ENCODE measurements at regions of chr20 and their contacts with region 1.

Region 1: GRCh38 chr20:36605399-36606157 is at the start of gene RAB5IF:
- DNase-seq: peak; percentile 98 to 100 (median 99)
- H3K4me3 ChIP-seq: peak within 1 kb of the TSS; percentile 65
- H3K4me3 Mint-ChIP-seq: peak within 1 kb of the TSS; percentile 97 to 99 (median 98)
- H3K27ac ChIP-seq: peak within 1 kb of the TSS; percentile 88
- H3K27ac Mint-ChIP-seq: peak within 1 kb of the TSS; percentile 97 to 99 (median 98)
- H3K4me1 ChIP-seq: peaks cover 27% of the 10 kb centered on the region
- H3K4me1 Mint-ChIP-seq: peaks cover 23 to 43% (median 34%) of the 10 kb centered on the region in 3 donors
- H3K27me3 ChIP-seq: no peaks in the 10 kb centered on the region
- H3K27me3 Mint-ChIP-seq: peaks cover 0 to 1% of the 10 kb centered on the region in 2 donors
- total RNA-seq, gene RAB5IF: 159 to 173 TPM

Region 2: GRCh38 chr20:36465109-36466080 is 140.2 kb before region 1 on chr20:
- CTCF ChIA-PET with region 1: interaction called, 14 read pairs
- POLR2A ChIA-PET with region 1: interaction called, 3 read pairs
- DNase-seq: no peak
- H3K4me3 ChIP-seq: no peak overlapping the region
- H3K4me3 Mint-ChIP-seq: peak overlapping the region; percentile 45 to 85 (median 61)
- H3K27ac ChIP-seq: no peak overlapping the region
- H3K27ac Mint-ChIP-seq: peak overlapping the region; percentile 70 to 96 (median 91)
- H3K4me1 ChIP-seq: peaks cover 75% of the 10 kb centered on the region
- H3K4me1 Mint-ChIP-seq: peaks cover 66 to 84% (median 73%) of the 10 kb centered on the region in 3 donors
- H3K27me3 ChIP-seq: no peaks in the 10 kb centered on the region
- H3K27me3 Mint-ChIP-seq: no peaks in the 10 kb centered on the region

Region 3: GRCh38 chr20:36573103-36573794 is 32.3 kb before region 1 on chr20 and contains the start of gene TGIF2:
- CTCF ChIA-PET with region 1: interaction called, 42 read pairs
- POLR2A ChIA-PET with region 1: interaction called, 49 read pairs
- DNase-seq: peak; percentile 85 to 96 (median 93)
- H3K4me3 ChIP-seq: peak within 1 kb of the TSS; percentile 66
- H3K4me3 Mint-ChIP-seq: peak within 1 kb of the TSS; percentile 90 to 96 (median 93)
- H3K27ac ChIP-seq: peak within 1 kb of the TSS; percentile 91
- H3K27ac Mint-ChIP-seq: peak within 1 kb of the TSS; percentile 97 to 100 (median 98)
- H3K4me1 ChIP-seq: peaks cover 33% of the 10 kb centered on the region
- H3K4me1 Mint-ChIP-seq: peaks cover 30 to 40% (median 37%) of the 10 kb centered on the region in 3 donors
- H3K27me3 ChIP-seq: no peaks in the 10 kb centered on the region
- H3K27me3 Mint-ChIP-seq: peaks cover 0 to 3% of the 10 kb centered on the region in 2 donors
- total RNA-seq, gene TGIF2: 46.1 to 49.8 TPM

Region 4: DNA sequence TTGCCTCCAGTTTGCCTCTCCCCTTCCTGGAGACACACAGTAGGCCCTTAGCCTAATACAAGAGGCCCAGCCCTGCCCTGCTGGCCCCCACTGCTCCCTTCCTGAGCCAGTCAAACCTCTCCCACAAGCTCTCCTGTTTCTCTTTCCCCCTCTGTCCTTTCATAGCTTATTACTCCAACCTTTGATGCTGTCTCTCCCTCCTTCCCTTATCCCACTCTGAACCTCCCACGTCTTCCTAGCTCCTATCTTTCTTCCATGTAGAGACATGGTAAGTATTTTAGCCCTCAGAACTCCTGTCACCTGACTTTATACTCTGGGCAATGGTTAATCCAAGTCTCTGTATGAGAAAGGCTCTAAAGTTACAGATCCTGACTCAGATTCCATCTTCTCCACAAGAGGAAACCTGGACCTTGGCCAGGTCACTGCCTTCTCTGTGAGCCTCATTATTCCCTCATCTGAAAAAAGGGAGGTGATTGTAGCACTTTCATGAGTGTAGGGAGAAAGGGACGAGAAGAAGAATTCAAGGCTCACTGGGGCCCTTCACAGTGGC is 25.5 kb before region 1 on chr20:
- CTCF ChIA-PET with region 1: interaction called, 42 read pairs
- POLR2A ChIA-PET with region 1: interaction called, 17 read pairs
- DNase-seq: no peak
- H3K4me3 ChIP-seq: no peak overlapping the region
- H3K4me3 Mint-ChIP-seq: peak overlapping the region in 1 of 7 donors; percentile 75
- H3K27ac ChIP-seq: no peak overlapping the region
- H3K27ac Mint-ChIP-seq: peak overlapping the region in 6 of 8 donors; percentile 34 to 83 (median 67)
- H3K4me1 ChIP-seq: peaks cover 24% of the 10 kb centered on the region
- H3K4me1 Mint-ChIP-seq: peaks cover 23 to 36% (median 28%) of the 10 kb centered on the region in 3 donors
- H3K27me3 ChIP-seq: no peaks in the 10 kb centered on the region
- H3K27me3 Mint-ChIP-seq: no peaks in the 10 kb centered on the region

Region 5: DNA sequence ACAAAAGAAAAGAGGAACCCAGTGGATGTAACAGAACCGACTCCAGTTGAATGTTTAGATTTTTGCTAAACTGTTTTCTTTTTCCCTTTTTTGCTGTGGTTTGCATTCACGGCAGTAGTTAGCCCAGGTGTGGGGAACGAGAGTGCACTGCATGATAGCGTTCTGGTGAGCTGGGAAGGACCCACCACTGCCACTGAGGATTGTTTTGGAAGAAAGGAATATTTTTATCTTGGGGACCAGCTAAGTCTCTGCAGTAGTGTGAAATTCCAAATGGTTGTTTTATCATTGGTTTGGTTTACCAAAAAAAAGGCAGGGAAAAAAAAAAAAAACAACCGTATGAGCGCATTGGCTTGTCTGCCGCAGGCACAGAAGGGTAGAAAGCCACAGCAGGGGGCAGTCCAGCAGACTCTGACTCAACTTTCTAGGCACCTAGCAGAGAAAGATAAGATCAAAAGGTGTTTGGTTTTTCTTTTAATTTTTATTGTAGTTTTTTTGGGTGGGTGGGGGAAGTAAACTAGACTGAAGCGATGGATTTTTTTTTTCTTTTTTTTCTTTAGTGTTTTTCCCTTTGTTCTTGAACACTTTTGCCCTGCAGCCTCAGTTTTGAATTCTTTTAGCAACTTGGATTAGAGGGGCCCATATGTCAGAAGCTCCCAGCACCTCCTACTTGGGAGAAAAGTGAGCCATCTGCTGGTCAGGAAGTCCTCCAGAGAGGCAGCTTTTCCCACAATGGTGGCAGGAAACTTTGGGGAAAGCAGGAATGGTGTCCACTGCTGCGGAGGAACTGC is 13.5 kb before region 1 on chr20:
- CTCF ChIA-PET with region 1: interaction called, 59 read pairs
- POLR2A ChIA-PET with region 1: interaction called, 22 read pairs
- DNase-seq: peak in 4 of 5 donors; percentile 38 to 77 (median 48)
- H3K4me3 ChIP-seq: no peak overlapping the region
- H3K4me3 Mint-ChIP-seq: peak overlapping the region in 4 of 7 donors; percentile 25 to 66 (median 43)
- H3K27ac ChIP-seq: no peak overlapping the region
- H3K27ac Mint-ChIP-seq: peak overlapping the region; percentile 72 to 95 (median 89)
- H3K4me1 ChIP-seq: peaks cover 26% of the 10 kb centered on the region
- H3K4me1 Mint-ChIP-seq: peaks cover 32 to 59% (median 49%) of the 10 kb centered on the region in 3 donors
- H3K27me3 ChIP-seq: no peaks in the 10 kb centered on the region
- H3K27me3 Mint-ChIP-seq: no peaks in the 10 kb centered on the region

Region 6: GRCh38 chr20:36629719-36630681 is 24.4 kb after region 1 on chr20:
- CTCF ChIA-PET with region 1: interaction called, 15 read pairs
- POLR2A ChIA-PET with region 1: interaction called, 7 read pairs
- DNase-seq: peak in 4 of 5 donors; percentile 31 to 75 (median 52)
- H3K4me3 ChIP-seq: peak overlapping the region; percentile 28
- H3K4me3 Mint-ChIP-seq: peak overlapping the region; percentile 43 to 87 (median 82)
- H3K27ac ChIP-seq: peak overlapping the region; percentile 25
- H3K27ac Mint-ChIP-seq: peak overlapping the region; percentile 97 to 98 (median 97)
- H3K4me1 ChIP-seq: peaks cover 39% of the 10 kb centered on the region
- H3K4me1 Mint-ChIP-seq: peaks cover 47 to 76% (median 56%) of the 10 kb centered on the region in 3 donors
- H3K27me3 ChIP-seq: no peaks in the 10 kb centered on the region
- H3K27me3 Mint-ChIP-seq: no peaks in the 10 kb centered on the region

Region 7: GRCh38 chr20:36645998-36646397 is 40.4 kb after region 1 on chr20 and contains the start of gene SLA2:
- CTCF ChIA-PET with region 1: interaction called, 30 read pairs
- POLR2A ChIA-PET with region 1: interaction called, 14 read pairs
- DNase-seq: peak; percentile 54 to 82 (median 75)
- H3K4me3 ChIP-seq: peak within 1 kb of the TSS; percentile 91
- H3K4me3 Mint-ChIP-seq: peak within 1 kb of the TSS; percentile 94 to 99 (median 97)
- H3K27ac ChIP-seq: peak within 1 kb of the TSS; percentile 71
- H3K27ac Mint-ChIP-seq: peak within 1 kb of the TSS; percentile 95 to 99 (median 98)
- H3K4me1 ChIP-seq: peaks cover 44% of the 10 kb centered on the region
- H3K4me1 Mint-ChIP-seq: peaks cover 50 to 61% (median 61%) of the 10 kb centered on the region in 3 donors
- H3K27me3 ChIP-seq: no peaks in the 10 kb centered on the region
- H3K27me3 Mint-ChIP-seq: no peaks in the 10 kb centered on the region
- total RNA-seq, gene SLA2: 47.8 to 51.2 TPM

Measured in CD8-positive, alpha-beta memory T cell (primary cell).